ENCODE measurements at regions of chr19 and their contacts with region 1.

Region 1: DNA sequence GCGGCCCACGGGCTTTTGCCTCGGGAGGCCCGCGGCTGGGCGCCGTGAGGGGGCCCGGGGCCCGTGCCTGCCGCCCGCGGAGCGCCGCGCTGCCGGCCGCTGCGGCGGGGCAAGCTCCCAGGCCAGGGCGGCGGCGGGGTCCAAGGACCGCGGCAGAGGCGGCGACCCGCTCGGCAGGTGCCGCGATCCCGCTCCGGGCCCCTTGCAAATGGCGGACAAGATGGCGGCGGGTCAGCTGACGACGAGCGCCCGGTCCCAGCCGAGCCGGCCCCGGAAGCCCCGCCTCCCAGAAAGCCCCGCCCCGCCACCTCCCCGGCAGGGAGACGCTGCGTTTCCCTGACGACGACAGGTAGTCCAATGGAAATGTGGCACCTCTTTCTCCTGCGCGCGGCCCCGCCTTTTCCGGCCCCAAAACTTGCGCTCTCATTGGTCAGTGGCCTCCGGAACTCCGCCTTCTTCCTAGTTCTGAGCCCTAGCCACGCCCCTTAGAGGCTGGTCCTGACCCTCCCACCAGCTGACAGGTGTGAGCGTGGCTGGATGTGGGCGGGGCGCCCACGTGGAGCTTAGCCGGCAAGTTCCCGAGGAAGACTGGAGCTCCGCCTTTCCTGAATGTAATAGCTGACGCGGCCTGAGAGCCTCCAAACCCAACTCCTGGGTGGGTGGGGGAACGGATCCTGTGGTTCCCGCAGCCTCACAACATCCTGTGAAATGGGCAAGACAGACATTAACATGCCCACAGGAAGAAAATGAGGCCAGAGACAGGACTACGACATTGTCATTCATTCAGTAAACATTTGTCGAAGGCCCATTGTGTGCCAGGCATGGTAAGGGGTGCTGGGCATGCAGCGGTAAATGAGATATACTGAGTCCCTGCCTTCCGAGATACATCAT is at the start of gene AP3D1:
- DNase-seq: peak; percentile 100
- ATAC-seq: peak; percentile 87
- H3K4me3 ChIP-seq: peak within 1 kb of the TSS; percentile 80
- H3K4me3 Mint-ChIP-seq: peak within 1 kb of the TSS; percentile 93
- H3K27ac ChIP-seq: peak within 1 kb of the TSS; percentile 77 to 92
- H3K27ac Mint-ChIP-seq: peak within 1 kb of the TSS; percentile 90
- H3K4me1 ChIP-seq: peaks cover 50% of the 10 kb centered on the region
- H3K4me1 Mint-ChIP-seq: peaks cover 31% of the 10 kb centered on the region
- H3K27me3 ChIP-seq: no peaks in the 10 kb centered on the region
- H3K27me3 Mint-ChIP-seq: no peaks in the 10 kb centered on the region
- CTCF ChIP-seq: no peak
- total RNA-seq, gene AP3D1: 41.8 to 41.9 TPM

Region 2: DNA sequence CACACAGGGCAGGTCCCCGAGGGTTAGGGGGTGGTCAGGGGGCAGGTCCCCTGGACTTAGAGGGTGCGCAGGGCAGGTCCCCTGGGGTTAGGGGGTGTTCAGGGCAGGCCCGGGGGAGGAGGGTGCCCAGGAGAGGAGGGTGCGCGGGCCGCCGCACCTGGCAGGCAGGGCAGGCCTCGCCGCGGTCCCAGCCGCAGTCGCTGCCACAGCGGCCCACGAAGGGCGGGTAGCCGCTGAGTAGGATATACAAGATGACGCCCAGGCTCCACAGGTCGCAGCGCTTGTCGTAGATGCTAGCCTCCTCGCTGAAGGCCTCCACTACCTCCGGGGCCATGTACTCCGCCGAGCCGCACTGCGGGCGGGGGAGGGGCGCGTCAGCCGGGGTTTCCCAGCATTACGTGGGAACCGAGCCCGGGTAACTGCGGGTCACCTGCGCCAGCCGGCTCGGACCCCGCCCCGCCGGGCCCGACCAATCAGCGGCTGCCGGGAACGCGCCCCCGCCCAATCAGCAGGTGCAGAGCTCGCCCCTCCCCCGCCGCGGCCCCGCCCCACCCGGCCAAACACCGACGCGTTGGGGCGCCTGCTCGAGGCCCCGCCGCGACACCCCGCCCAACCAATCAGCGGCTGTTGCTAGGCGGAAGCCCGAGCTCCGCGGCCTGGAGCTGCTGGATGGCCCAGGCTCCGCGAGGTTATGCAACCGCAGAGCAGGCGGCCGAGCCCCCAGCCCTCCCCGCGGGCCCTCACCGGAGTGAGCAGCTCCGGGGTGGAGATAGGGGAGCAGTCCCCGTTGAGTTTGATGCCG is 109.7 kb before region 1 on chr19:
- CTCF ChIA-PET with region 1: no interaction called
- POLR2A ChIA-PET with region 1: interaction called, 11 read pairs
- intact Hi-C with region 1: no loop called
- DNase-seq: peak; percentile 99 to 100 (median 100)
- ATAC-seq: peak; percentile 78
- H3K4me3 ChIP-seq: peak overlapping the region; percentile 46
- H3K4me3 Mint-ChIP-seq: peak overlapping the region; percentile 79
- H3K27ac ChIP-seq: peak overlapping the region; percentile 98 to 99
- H3K27ac Mint-ChIP-seq: peak overlapping the region; percentile 97
- H3K4me1 ChIP-seq: peaks cover 72% of the 10 kb centered on the region
- H3K4me1 Mint-ChIP-seq: peaks cover 28% of the 10 kb centered on the region
- H3K27me3 ChIP-seq: no peaks in the 10 kb centered on the region
- H3K27me3 Mint-ChIP-seq: no peaks in the 10 kb centered on the region
- CTCF ChIP-seq: no peak

Region 3: GRCh38 chr19:2168619-2169424 is 17.2 kb after region 1 on chr19:
- CTCF ChIA-PET with region 1: interaction called, 20 read pairs
- POLR2A ChIA-PET with region 1: interaction called, 4 read pairs
- intact Hi-C with region 1: loop called in 1 of 2 experiments (anchors 1 kb)
- DNase-seq: peak in 6 of 14 experiments; percentile 39 to 85 (median 58)
- ATAC-seq: peak; percentile 16
- H3K4me3 ChIP-seq: no peak overlapping the region
- H3K4me3 Mint-ChIP-seq: peak overlapping the region; percentile 54
- H3K27ac ChIP-seq: peak overlapping the region; percentile 13 to 55
- H3K27ac Mint-ChIP-seq: peak overlapping the region; percentile 62
- H3K4me1 ChIP-seq: peaks cover 67% of the 10 kb centered on the region
- H3K4me1 Mint-ChIP-seq: peaks cover 37% of the 10 kb centered on the region
- H3K27me3 ChIP-seq: no peaks in the 10 kb centered on the region
- H3K27me3 Mint-ChIP-seq: no peaks in the 10 kb centered on the region
- CTCF ChIP-seq: no peak

Region 4: GRCh38 chr19:2328401-2329148 is 177.0 kb after region 1 on chr19 and contains the starts of genes LSM7 and SPPL2B:
- CTCF ChIA-PET with region 1: no interaction called
- POLR2A ChIA-PET with region 1: no interaction called
- intact Hi-C with region 1: loop called in 1 of 2 experiments (anchors 5 kb)
- DNase-seq: peak; percentile 86 to 98 (median 92)
- ATAC-seq: peak; percentile 69
- H3K4me3 ChIP-seq: peak within 1 kb of the TSS; percentile 96
- H3K4me3 Mint-ChIP-seq: peak within 1 kb of the TSS; percentile 100
- H3K27ac ChIP-seq: peak within 1 kb of the TSS; percentile 57 to 78
- H3K27ac Mint-ChIP-seq: peak within 1 kb of the TSS; percentile 93
- H3K4me1 ChIP-seq: peaks cover 70% of the 10 kb centered on the region
- H3K4me1 Mint-ChIP-seq: peaks cover 74% of the 10 kb centered on the region
- H3K27me3 ChIP-seq: no peaks in the 10 kb centered on the region
- H3K27me3 Mint-ChIP-seq: no peaks in the 10 kb centered on the region
- CTCF ChIP-seq: no peak
- total RNA-seq, gene LSM7: 73.6 to 80.1 TPM
- total RNA-seq, gene SPPL2B: 106 to 111 TPM

Region 5: GRCh38 chr19:2391118-2391725 is 239.6 kb after region 1 on chr19:
- CTCF ChIA-PET with region 1: interaction called, 4 read pairs
- POLR2A ChIA-PET with region 1: no interaction called
- intact Hi-C with region 1: loop called (anchors 1 kb)
- DNase-seq: peak in 12 of 14 experiments; percentile 6 to 83 (median 23)
- ATAC-seq: peak; percentile 85
- H3K4me3 ChIP-seq: no peak overlapping the region
- H3K4me3 Mint-ChIP-seq: no peak overlapping the region
- H3K27ac ChIP-seq: no peak overlapping the region
- H3K27ac Mint-ChIP-seq: no peak overlapping the region
- H3K4me1 ChIP-seq: peaks cover 12% of the 10 kb centered on the region
- H3K4me1 Mint-ChIP-seq: peaks cover 4% of the 10 kb centered on the region
- H3K27me3 ChIP-seq: no peaks in the 10 kb centered on the region
- H3K27me3 Mint-ChIP-seq: peaks cover 12% of the 10 kb centered on the region
- CTCF ChIP-seq: peak; percentile 81

Measured in CD4-positive, alpha-beta T cell (primary cell).